ENCODE measurements at regions of chr5 and their contacts with region 1.

Region 1: GRCh38 chr5:6820851-6821479 is 107.7 kb downstream of the TENT4A start:
- DNase-seq: peak; percentile 72
- ATAC-seq: peak; percentile 69
- H3K4me3 Mint-ChIP-seq: no peak overlapping the region
- H3K27ac Mint-ChIP-seq: no peak overlapping the region
- H3K4me1 Mint-ChIP-seq: peaks cover 2% of the 10 kb centered on the region
- H3K27me3 Mint-ChIP-seq: peaks cover 34% of the 10 kb centered on the region

Region 2: GRCh38 chr5:6765612-6766525 is 55.1 kb before region 1 on chr5:
- CTCF ChIA-PET with region 1: interaction called, 11 read pairs
- DNase-seq: peak; percentile 84
- ATAC-seq: peak; percentile 92
- H3K4me3 Mint-ChIP-seq: no peak overlapping the region
- H3K27ac Mint-ChIP-seq: no peak overlapping the region
- H3K4me1 Mint-ChIP-seq: peaks cover 7% of the 10 kb centered on the region
- H3K27me3 Mint-ChIP-seq: no peaks in the 10 kb centered on the region

Region 3: DNA sequence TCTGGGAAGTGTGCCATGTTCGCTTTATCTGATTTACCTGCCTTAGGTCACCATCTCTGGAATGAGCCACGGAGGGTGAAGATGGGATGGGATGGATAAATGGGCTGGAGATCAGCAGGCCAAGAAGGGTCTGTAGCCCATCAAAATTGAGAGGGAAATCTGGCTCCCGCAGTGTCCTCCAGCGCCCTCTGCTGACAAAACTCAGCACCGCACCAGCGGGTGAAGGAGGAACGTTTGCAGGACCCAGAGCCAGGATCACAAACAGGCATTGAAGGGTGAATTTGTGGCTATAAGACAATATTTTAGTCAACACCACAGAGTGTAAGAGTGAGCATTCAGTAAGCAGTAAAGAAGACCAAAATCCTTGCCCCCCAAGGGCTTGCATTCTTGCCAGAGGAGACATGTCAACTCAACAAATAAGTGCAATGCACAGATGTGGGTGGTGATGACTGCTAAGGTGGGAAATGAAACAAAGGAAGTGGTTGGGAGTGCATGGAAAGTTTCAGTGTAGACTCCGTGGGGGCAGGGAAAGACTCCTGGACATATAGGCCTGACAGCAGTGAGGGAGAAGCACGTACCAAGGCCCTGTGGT is 16.6 kb after region 1 on chr5:
- CTCF ChIA-PET with region 1: interaction called, 14 read pairs
- DNase-seq: peak; percentile 51
- ATAC-seq: no peak
- H3K4me3 Mint-ChIP-seq: no peak overlapping the region
- H3K27ac Mint-ChIP-seq: no peak overlapping the region
- H3K4me1 Mint-ChIP-seq: peaks cover 6% of the 10 kb centered on the region
- H3K27me3 Mint-ChIP-seq: peaks cover 7% of the 10 kb centered on the region

Region 4: DNA sequence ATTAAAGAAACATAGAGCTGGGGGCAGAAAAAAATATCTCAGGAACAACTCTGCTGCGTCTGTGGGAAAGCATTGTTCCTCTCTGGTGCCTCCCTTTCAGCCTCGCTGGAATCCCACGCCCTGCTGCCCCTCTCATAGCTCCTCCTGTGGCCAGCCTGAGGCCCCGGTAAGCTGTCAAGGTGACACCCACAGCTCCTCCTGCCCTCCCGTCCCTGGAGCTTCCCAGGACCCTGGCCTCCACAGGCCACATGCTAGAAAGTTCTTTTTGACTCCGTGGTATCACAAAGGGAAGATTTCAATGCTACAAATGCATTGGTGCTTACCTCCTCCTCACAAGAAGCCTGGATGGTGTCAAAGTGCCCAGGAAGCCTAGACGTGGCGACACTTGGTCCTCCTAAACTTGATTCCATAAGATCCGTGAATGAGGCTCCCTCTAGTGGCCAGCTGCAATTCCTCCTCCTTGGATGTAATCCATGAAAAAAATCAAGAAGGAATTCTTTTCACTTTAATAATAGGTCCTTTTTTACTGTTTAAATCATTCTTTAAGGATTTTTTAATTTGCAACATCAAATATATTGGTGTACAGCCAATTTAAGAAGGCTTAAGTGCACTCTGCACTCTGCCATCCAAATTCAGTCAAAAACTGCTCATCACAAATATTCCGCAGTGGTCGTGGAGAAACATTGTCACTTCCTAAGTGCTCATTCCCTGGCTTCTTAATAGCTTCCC is 925.1 kb after region 1 on chr5:
- CTCF ChIA-PET with region 1: interaction called, 15 read pairs
- DNase-seq: peak; percentile 45
- ATAC-seq: no peak
- H3K4me3 Mint-ChIP-seq: no peak overlapping the region
- H3K27ac Mint-ChIP-seq: no peak overlapping the region
- H3K4me1 Mint-ChIP-seq: no peaks in the 10 kb centered on the region
- H3K27me3 Mint-ChIP-seq: no peaks in the 10 kb centered on the region